Activated T-helper 1 cell treated with anti-CD3 and anti-CD28 coated beads, Interleukin-12 subunit alpha, Interleukin-12 subunit beta, Interleukin-2, Interleukin-4 antibody, amounts not matched to agents 30 ng/mL and 10 ng/mL and 1 ng/mL, durations not matched to agents 14 hours and 24 hours and 36 hours (primary cell): ENCODE measurements at regions of chr12 and their contacts with region 1.

Region 1: DNA sequence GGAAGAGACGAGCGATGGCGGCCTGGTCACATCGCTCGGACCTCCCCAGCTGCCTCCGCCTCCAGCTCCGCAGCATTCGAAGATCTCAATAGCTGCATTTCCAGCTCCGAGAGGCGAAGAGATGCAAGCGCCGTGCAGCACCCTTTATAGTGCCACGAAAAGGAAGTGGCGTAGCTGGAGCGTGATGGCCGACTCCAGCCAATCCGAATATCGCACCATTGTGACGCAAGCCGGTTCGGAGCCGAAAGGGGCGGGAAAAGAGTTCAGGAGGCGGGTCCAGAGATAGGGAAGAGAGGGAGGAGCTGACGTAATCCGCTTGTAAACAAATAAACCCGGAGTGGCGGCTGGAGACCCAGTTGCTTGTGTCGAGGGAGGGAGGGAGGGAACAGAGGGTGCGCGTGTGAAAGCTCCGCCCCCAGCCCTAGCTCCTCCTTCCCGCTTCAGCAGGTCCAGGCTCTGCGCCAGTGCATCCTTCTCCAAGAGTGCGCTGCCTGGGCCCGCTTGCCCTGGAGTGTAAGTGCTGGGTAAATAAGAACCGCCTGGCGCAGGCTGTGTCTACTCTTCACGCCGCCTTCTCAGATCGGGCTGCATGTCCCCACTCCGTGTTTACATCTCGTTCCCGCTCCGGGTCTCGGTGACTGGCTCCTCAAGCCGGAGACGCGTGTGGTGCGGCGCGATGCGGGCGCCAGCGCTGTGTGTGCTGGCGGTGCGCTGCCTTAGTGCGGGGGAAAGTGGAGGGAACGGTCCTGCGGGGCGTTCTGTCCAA is at the start of gene BTG1:
- DNase-seq: peak; percentile 99
- H3K4me3 Mint-ChIP-seq: peak within 1 kb of the TSS; percentile 94
- H3K27ac Mint-ChIP-seq: peak within 1 kb of the TSS; percentile 97
- H3K4me1 Mint-ChIP-seq: peaks cover 51% of the 10 kb centered on the region
- H3K27me3 Mint-ChIP-seq: peaks cover 2% of the 10 kb centered on the region
- total RNA-seq, gene BTG1: 86.4 and 87.9 TPM in 2 replicates

Region 2: DNA sequence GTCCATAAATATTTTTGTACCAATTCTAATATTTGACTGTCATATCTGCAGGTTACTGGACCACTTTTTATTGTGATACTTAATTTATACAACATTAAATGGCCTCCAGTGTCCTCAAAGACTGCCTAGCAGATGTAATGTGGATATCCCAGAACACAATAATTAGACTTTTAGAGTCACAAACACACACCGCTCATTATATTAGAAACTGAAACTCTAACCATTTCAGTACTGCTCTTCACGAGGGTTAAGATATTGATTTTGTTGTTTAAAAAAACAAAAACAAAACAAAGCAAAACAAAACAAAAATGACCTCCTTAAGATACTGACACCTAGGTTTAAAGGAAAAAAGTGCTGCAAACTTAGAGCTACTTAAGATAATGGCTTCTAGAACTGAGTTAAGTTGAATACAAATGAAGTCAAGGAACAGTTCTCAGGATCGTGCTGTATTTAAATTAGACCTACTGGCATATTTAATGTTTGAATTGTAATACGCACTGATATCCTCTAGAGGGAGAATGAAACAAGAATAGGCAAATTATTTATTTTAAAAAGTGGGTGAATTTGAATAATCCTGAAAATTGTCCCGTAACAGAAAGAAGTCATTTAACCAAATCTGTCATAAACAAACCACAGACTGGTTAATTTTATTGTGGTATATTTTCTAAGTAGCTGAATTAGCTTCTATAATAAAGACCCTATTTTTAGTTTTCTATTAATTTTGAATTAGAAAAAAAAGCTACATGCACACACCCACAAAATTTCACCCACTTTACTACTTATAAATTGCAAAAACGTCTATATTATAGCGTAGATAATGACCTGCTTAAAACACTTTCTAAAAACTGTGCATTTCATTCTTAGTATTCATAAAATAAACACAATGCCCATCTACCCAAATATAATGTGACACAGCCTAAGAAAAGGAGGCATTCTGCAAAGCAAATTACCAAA is 568.1 kb before region 1 on chr12:
- intact Hi-C with region 1: loop called (anchors 2 kb)
- DNase-seq: no peak
- H3K4me3 Mint-ChIP-seq: peak overlapping the region; percentile 62
- H3K27ac Mint-ChIP-seq: no peak overlapping the region
- H3K4me1 Mint-ChIP-seq: peaks cover 6% of the 10 kb centered on the region
- H3K27me3 Mint-ChIP-seq: peaks cover 15% of the 10 kb centered on the region

Region 3: GRCh38 chr12:91991399-91992187 is 154.3 kb before region 1 on chr12:
- intact Hi-C with region 1: loop called (anchors 1 kb)
- DNase-seq: no peak
- H3K4me3 Mint-ChIP-seq: no peak overlapping the region
- H3K27ac Mint-ChIP-seq: no peak overlapping the region
- H3K4me1 Mint-ChIP-seq: peaks cover 4% of the 10 kb centered on the region
- H3K27me3 Mint-ChIP-seq: no peaks in the 10 kb centered on the region

Region 4: GRCh38 chr12:92218394-92219077 is 72.6 kb after region 1 on chr12:
- intact Hi-C with region 1: loop called (anchors 2 kb)
- DNase-seq: no peak
- H3K4me3 Mint-ChIP-seq: peak overlapping the region; percentile 17
- H3K27ac Mint-ChIP-seq: peak overlapping the region; percentile 59
- H3K4me1 Mint-ChIP-seq: peaks cover 21% of the 10 kb centered on the region
- H3K27me3 Mint-ChIP-seq: no peaks in the 10 kb centered on the region

Region 5: DNA sequence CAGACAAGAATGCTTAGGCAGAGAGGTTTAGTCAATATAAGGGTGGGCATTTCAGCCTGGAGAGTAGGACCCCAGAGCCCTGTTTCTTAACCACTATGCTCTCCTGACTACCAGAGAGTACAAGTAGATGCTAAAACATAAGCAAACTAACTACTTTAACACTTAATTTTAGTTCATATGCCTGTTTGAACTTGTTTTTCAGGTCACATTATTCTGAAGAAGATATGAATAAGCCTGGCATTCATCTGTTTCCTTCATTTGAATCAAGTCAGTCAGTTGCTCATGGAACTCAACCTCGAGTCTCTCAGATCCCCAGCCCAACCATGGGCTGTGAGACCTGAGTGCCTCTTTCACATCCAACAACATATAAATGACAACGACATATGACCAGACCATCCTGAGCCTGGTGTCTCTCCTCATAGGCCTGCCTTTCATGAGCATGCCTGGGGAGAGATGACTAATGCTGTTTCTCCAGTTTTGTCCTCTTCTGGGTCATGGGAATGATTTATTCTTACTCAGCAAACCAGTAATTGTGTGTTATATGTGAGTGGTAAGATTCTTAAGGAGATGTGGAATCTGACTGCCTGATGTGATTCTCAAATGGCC is 250.8 kb after region 1 on chr12:
- intact Hi-C with region 1: no loop called
- DNase-seq: no peak
- H3K4me3 Mint-ChIP-seq: no peak overlapping the region
- H3K27ac Mint-ChIP-seq: no peak overlapping the region
- H3K4me1 Mint-ChIP-seq: peaks cover 75% of the 10 kb centered on the region
- H3K27me3 Mint-ChIP-seq: no peaks in the 10 kb centered on the region

Region 6: GRCh38 chr12:92505254-92506231 is 359.6 kb after region 1 on chr12:
- intact Hi-C with region 1: loop called (anchors 1 kb)
- DNase-seq: peak; percentile 13
- H3K4me3 Mint-ChIP-seq: peak overlapping the region; percentile 77
- H3K27ac Mint-ChIP-seq: peak overlapping the region; percentile 93
- H3K4me1 Mint-ChIP-seq: peaks cover 47% of the 10 kb centered on the region
- H3K27me3 Mint-ChIP-seq: no peaks in the 10 kb centered on the region

Region 7: GRCh38 chr12:92649511-92650227 is 503.8 kb after region 1 on chr12:
- intact Hi-C with region 1: loop called (anchors 2 kb)
- DNase-seq: peak; percentile 40
- H3K4me3 Mint-ChIP-seq: no peak overlapping the region
- H3K27ac Mint-ChIP-seq: no peak overlapping the region
- H3K4me1 Mint-ChIP-seq: peaks cover 10% of the 10 kb centered on the region
- H3K27me3 Mint-ChIP-seq: no peaks in the 10 kb centered on the region